OCI-LY7 (cell line): ENCODE measurements at regions of chr3 and their contacts with region 1.

Region 1: DNA sequence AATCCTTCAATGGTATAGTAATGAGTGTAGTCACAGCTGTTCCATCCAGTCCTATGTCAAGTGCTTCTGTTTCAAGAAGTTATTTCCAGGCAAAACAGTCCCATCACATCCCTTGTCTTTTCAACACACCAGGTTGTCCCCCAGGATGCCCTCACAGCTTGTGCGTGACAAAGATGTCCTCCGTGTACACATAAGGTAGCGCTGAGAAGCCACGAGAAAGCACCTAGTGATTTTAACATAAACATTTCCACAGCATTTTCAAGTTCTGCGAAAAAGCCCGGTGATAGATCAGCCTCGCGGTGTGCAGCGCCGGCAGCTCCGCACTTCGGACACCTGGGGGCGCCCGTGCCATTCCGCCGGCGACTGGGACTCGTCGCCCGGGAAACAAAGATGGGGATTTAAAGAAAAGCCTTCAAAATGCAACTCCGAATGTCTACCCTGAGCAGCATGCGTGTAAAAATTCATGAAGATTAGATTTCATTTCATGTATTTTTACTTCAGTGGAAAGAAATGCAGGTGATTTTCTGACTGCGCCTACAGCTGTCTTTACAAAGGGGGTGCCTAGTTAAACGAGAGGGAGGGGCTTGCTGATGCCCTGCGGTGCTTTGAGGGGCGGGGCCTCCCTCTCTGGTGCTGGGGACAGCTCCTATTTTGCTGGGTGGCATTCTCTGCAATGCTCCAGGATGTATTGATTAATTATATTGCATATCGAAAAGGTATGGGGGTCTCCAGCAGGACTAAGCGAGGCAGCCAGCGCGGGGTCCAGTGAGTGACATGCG is 49.9 kb downstream of the KY start:
- DNase-seq: peak; percentile 57
- H3K4me3 ChIP-seq: no peak overlapping the region
- H3K27ac ChIP-seq: no peak overlapping the region
- H3K4me1 ChIP-seq: no peaks in the 10 kb centered on the region
- CTCF ChIP-seq: peak; percentile 95

Region 2: GRCh38 chr3:134496471-134497071 is 104.3 kb before region 1 on chr3:
- CTCF ChIA-PET with region 1: no interaction called
- POLR2A ChIA-PET with region 1: no interaction called
- intact Hi-C with region 1: no loop called
- DNase-seq: no peak
- H3K4me3 ChIP-seq: no peak overlapping the region
- H3K27ac ChIP-seq: no peak overlapping the region
- H3K4me1 ChIP-seq: no peaks in the 10 kb centered on the region
- CTCF ChIP-seq: no peak

Region 3: DNA sequence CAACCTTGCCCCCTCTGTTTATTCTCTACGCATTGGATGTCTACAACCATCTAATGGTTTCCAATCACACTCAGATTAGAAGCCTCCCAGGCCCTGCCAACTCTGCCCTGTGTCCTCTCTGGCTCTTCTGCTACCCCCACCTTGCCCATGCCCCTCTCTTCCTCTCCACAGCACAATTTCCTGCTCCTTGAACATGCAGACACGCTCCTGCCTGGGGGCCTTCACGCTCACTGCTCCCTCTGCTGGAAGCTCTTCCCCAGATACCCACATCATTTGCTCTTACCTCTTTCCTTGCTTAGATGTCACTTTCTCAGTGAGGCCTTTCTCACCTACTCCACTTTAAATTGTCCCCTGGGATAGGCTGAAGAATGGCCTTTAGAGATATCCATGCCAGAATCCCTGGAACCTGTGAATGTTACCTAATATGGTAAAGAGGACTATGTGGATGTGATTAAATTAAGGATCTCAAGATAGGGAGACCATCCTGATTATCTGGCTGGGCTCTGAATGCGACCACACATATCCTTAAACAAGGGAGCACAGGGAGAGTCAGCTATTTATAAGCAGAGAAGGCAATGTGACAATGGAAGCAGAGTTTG is 40.1 kb after region 1 on chr3:
- CTCF ChIA-PET with region 1: no interaction called
- POLR2A ChIA-PET with region 1: no interaction called
- intact Hi-C with region 1: loop called (anchors 2 kb)
- DNase-seq: peak; percentile 28
- H3K4me3 ChIP-seq: no peak overlapping the region
- H3K27ac ChIP-seq: no peak overlapping the region
- H3K4me1 ChIP-seq: no peaks in the 10 kb centered on the region
- CTCF ChIP-seq: peak; percentile 72

Region 4: GRCh38 chr3:134677196-134677986 is 76.5 kb after region 1 on chr3:
- CTCF ChIA-PET with region 1: no interaction called
- POLR2A ChIA-PET with region 1: no interaction called
- intact Hi-C with region 1: loop called (anchors 2 kb)
- DNase-seq: peak; percentile 23
- H3K4me3 ChIP-seq: no peak overlapping the region
- H3K27ac ChIP-seq: no peak overlapping the region
- H3K4me1 ChIP-seq: no peaks in the 10 kb centered on the region
- CTCF ChIP-seq: peak; percentile 73

Region 5: DNA sequence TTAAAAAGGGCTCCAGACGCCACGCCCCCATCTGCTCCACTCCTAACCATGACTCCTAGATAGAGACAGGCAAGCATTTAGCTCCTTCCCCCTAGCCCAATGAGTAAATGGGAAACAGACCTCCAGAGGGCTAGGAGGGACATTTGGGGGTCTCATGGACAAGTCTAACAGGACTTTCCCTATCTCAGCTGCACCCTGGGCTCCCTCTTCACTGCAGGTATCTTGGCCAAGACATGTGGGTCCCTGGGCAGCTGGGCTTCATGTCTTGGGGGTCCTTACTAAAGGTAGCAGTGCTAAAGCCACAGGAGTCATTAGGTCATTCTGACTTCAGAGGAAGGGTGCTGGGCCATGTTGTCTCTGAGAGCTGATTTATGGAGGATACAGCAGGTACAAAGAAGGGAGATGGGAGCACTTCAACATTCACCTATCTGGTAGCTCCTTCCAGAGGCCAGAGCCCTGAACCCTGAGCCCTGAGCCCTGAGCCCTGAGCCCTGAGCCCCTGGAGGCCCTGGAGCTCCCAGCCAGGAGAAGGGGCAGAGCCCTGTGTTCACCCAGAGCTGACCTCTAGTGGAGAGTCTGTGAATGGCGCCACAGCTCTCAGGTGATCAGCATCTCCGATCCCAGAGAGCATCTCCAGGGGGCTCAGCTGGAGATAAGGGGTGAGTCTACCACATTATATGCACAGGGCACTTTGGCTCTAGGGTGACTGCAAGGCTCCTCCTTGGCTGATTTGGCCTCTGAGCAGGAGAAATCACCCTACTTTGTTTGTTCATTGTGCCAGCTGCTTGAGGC is 154.1 kb after region 1 on chr3:
- CTCF ChIA-PET with region 1: no interaction called
- POLR2A ChIA-PET with region 1: no interaction called
- intact Hi-C with region 1: loop called (anchors 10 kb)
- DNase-seq: peak; percentile 37
- H3K4me3 ChIP-seq: no peak overlapping the region
- H3K27ac ChIP-seq: no peak overlapping the region
- H3K4me1 ChIP-seq: no peaks in the 10 kb centered on the region
- CTCF ChIP-seq: peak; percentile 76